Right cardiac atrium (tissue), 5 donors: ENCODE measurements at regions of chr5 and their contacts with region 1.

Region 1: DNA sequence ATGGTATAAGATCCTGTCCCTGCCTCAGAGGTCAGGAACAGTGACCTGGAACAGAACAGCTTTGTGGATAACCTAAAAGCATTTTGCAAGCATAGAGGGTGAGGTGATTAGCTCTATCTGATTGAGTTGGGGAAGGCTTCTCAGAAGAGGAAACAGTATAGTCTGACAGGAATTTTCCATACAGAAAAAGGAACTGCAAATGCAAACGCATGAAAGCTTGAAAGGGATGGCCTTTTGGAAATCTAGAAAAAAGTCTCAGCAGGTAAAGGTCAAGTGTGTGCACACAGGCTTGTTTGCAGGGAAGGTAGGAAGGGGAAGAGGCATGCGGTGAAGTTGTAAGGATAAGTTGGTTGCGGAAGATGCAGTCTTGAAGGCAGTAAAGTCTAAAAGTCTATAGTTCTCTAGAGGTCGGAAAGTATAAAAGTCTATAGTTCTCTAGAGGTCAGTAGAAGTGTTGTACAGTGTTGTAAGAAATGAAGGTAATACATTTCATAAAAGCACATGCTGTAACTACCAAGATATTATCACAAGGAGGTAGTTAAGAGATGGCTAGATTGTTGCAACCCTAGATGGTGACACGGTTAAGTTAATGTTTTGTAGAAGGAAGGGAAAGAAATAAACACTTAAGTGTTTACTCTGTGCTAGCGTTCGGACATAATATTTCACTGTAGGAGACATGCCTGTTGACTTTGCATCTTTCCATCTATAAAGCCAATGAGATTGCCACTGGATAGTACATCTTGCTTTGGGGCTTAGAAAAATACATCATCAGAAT is 16.7 kb upstream of the HSPB3 start:
- DNase-seq: no peak
- ATAC-seq: no peak
- H3K4me3 ChIP-seq: no peak overlapping the region
- H3K27ac ChIP-seq: no peak overlapping the region
- H3K4me1 ChIP-seq: no peaks in the 10 kb centered on the region
- H3K27me3 ChIP-seq: no peaks in the 10 kb centered on the region

Region 2: DNA sequence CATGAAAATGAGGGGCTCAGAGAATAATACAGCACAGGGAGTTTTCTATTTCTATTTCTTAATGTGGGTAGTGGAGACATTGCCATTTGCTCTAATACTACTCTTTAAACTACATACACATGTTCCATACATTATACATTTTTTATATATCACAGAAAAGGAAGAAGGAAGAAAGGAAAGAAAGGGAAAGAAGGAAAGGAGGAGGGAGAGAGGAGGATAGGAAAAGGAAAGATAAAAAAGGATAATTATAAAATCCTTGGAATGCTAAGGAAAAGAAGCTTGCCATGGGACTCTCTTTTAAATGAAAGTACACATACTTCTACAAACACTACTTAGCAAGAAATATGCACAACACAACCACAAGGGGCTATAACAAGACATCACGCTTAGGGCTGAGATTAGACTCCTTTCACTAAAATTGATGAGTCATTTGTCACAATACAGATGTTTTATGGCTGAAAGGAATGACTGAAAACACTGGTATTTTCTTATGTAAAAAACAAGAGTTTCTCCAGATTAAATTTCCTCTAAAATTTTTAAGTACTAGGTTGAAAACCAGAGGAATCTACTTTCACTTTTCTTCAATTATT is 348.2 kb before region 1 on chr5:
- intact Hi-C with region 1: no loop called
- DNase-seq: no peak
- ATAC-seq: peak in 1 of 2 donors; percentile 33
- H3K4me3 ChIP-seq: no peak overlapping the region
- H3K27ac ChIP-seq: no peak overlapping the region
- H3K4me1 ChIP-seq: no peaks in the 10 kb centered on the region
- H3K27me3 ChIP-seq: no peaks in the 10 kb centered on the region

Region 3: DNA sequence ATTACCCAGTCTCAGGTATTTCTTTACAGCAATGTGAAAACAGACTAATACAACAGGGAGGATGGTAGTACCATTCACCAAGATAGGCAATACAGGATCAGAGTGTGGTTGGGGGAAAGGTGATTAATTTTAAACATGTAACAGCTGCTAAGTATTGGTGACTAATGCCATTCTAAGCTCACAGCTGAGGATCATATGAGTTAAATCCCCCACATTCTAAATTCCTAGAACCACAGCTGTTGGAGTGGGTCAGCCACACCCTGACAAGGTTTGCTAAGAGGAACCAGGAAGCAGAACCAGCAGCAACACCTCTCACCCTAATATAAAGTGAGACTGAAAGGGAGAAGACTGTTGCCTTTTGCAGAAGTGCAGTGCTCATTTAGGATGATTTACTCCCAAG is 41.5 kb after region 1 on chr5:
- intact Hi-C with region 1: loop called in 1 of 4 experiments (anchors 10 kb)
- DNase-seq: no peak
- ATAC-seq: no peak
- H3K4me3 ChIP-seq: no peak overlapping the region
- H3K27ac ChIP-seq: no peak overlapping the region
- H3K4me1 ChIP-seq: no peaks in the 10 kb centered on the region
- H3K27me3 ChIP-seq: no peaks in the 10 kb centered on the region

Region 4: DNA sequence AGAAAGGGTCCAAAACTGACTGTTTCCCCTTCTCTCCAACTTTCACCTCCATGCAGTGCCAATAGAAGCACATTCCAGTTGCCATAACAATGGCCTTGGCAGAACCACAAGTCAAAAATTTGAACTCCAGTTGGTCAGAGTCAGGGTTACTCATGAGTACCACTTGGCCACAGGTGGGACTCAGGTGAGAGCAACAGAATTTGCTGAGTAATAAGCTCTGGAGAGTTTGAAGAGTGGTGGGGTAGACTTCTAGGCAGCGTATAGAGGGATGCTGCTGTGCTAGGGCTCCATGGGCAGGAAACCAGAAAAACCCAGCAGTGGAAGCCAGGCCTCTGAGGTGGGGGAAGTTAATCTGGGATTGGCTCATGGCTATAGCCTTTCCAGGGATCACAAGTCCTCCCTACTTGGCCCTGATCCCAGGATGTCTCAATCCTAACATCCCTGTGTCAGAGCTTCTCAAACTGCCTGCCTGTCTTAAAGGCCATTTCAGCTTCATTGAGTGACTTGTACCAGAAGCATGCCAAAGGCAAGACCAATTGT is 109.0 kb after region 1 on chr5:
- intact Hi-C with region 1: no loop called
- DNase-seq: peak; percentile 54 to 67 (median 64)
- ATAC-seq: peak; percentile 84 to 93
- H3K4me3 ChIP-seq: no peak overlapping the region
- H3K27ac ChIP-seq: no peak overlapping the region
- H3K4me1 ChIP-seq: peaks cover 7% of the 10 kb centered on the region
- H3K27me3 ChIP-seq: no peaks in the 10 kb centered on the region